Dendritic cell treated with granulocyte-macrophage colony-stimulating factor and Interleukin-4, amounts not matched to agents 40 ng/mL and 50 ng/mL, for 4 days (primary cell): ENCODE measurements at regions of chr2 and their contacts with region 1.

Region 1: DNA sequence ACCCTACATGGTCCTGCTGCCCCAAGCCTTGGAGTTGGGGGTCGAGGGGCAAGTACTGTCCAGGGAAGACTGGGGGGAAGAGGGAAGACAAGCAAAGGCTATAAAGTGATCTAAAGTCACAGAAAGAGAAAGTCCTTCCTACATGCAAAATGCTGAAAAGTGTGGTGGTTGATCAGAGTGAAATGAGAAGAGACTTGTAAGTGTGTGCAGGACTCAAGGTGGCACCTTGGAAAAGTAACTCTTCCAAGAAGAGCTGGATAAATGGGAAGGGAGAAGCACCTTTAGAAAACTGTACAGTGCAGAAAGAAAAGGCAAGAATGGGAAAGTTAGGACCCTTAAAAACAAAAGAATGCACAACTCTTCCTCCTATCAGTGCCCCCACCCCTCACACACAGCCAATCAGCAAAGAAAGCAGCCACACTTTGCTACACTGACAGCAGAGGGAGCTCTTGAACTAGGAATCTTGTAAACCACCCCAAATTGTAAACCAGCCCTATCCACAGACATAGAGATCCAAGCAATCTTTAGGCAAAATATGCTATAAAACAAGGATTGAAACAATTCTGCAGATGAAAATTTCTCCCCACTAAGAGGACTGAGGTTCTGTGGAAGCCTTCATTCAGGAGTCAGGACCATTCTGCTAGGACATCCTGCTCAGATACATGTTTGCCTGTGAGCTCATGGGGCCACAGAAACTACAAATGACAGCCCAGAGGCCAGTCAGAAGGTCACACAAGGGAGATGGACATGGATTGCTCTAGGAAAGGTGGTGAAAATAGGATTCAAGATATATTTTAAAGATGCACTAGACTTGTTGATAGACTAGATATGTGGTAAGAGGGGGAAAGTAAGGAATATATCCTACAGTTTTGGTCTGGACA is 146.4 kb downstream of the FTCDNL1 start:
- H3K4me3 Mint-ChIP-seq: no peak overlapping the region
- H3K27ac Mint-ChIP-seq: no peak overlapping the region
- H3K4me1 Mint-ChIP-seq: no peaks in the 10 kb centered on the region
- H3K27me3 Mint-ChIP-seq: no peaks in the 10 kb centered on the region

Region 2: GRCh38 chr2:199739413-199740110 is 35.0 kb after region 1 on chr2:
- intact Hi-C with region 1: loop called (anchors 1 kb)
- H3K4me3 Mint-ChIP-seq: peak overlapping the region; percentile 42
- H3K27ac Mint-ChIP-seq: peak overlapping the region; percentile 52
- H3K4me1 Mint-ChIP-seq: peaks cover 18% of the 10 kb centered on the region
- H3K27me3 Mint-ChIP-seq: no peaks in the 10 kb centered on the region

Region 3: DNA sequence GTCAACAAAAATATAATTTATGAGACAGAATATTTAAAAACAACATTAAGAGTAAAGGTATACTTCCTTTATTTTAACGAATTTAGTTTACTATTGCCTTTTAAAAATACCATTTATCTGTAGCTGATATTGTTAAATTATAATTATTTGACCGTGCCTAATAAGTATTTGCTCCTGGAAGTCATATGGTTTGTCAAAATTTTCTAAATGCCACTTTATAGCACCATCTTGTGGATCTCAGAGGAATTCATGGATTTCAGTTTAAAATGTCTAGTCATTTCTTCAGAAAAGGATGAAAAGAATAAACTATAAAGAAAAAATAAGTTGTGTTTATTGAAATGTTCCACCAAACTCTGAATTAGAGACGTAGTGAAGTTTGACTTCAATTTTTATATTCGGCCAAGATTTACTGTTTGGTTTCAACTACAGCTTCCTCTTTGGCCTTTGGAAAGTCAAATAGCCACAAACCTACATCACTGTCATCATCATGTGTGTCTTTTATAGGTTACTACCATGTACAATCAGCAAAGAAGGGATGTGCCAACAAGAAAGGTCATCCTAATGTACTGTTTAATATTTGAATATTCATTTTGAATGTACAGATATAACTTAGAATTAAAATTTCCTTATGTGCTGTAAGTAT is 156.7 kb after region 1 on chr2:
- intact Hi-C with region 1: loop called (anchors 1 kb)
- H3K4me3 Mint-ChIP-seq: no peak overlapping the region
- H3K27ac Mint-ChIP-seq: no peak overlapping the region
- H3K4me1 Mint-ChIP-seq: no peaks in the 10 kb centered on the region
- H3K27me3 Mint-ChIP-seq: no peaks in the 10 kb centered on the region

Region 4: GRCh38 chr2:199943373-199943772 is 238.8 kb after region 1 on chr2:
- intact Hi-C with region 1: loop called (anchors 2 kb)
- H3K4me3 Mint-ChIP-seq: no peak overlapping the region
- H3K27ac Mint-ChIP-seq: no peak overlapping the region
- H3K4me1 Mint-ChIP-seq: no peaks in the 10 kb centered on the region
- H3K27me3 Mint-ChIP-seq: no peaks in the 10 kb centered on the region